Right ventricle myocardium superior (tissue), 1 donor: ENCODE measurements at regions of chr2 and their contacts with region 1.

Region 1: GRCh38 chr2:72892506-72893173 is 5.4 kb downstream of the SPR start:
- DNase-seq: peak; percentile 79
- ATAC-seq: peak; percentile 85

Region 2: DNA sequence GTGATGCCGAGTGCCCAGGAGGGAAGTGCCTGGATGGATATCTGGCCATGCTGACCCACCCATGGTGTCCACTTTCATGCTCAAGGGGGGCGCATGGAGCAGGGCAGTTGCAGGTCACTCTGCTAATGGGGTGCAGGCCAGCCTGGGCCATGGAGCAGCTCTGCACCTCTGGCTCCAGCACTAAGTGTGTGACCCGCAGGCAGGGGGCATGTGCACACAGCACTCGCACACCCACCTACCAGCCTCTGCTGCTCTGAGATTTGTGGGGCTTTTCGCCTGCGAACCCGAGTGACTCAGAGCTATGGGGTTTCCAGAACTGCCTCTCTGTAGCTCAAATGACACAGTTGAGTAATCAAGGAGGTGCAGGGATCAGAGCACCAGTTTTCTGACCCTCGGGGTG is 811.2 kb before region 1 on chr2:
- intact Hi-C with region 1: no loop called
- DNase-seq: no peak
- ATAC-seq: no peak

Region 3: DNA sequence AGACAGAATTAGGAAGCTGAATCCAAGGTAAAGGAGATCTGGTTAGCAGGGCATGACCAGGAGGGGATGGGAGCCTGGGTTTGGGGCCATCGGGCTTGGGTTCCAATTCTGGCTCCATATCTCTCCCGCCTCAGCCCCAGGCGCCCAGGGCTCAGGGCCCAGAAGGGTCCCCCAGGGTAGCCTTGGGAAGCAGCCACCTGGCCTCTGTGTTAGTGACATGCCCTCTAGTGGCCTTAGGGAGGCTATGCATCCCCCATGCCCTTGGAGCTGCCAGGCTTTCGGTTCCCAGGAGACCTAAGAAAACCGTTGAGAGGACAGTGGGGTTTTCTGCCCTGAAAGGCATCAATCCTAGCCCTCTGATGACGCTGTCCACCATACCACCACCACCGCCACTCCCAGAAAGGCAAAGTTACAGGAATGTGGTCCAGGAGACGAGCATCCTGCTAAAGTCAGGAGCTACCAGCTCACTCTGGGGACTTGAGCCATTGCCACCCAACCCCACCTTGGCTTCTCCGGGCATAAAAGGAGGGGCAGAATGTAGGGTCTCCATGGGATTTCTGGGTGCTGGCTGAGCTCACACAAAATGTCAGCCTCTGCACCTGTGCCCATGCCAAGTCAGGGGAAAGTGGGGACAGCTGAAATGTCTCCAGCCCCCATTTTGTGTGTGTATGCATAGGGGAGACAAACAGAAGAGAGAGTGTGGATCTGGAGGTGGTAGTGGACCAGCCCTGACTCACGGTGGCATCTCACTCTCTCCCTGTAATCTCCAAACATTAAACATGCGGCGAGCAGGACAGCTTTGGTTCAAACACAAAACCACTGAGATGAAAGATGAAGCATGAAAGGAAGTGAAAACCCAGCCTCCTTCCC is 81.2 kb after region 1 on chr2:
- intact Hi-C with region 1: loop called (anchors 10 kb)
- DNase-seq: no peak
- ATAC-seq: peak; percentile 88

Region 4: GRCh38 chr2:72993147-72993932 is 100.7 kb after region 1 on chr2:
- intact Hi-C with region 1: no loop called
- DNase-seq: no peak
- ATAC-seq: peak; percentile 44

Region 5: DNA sequence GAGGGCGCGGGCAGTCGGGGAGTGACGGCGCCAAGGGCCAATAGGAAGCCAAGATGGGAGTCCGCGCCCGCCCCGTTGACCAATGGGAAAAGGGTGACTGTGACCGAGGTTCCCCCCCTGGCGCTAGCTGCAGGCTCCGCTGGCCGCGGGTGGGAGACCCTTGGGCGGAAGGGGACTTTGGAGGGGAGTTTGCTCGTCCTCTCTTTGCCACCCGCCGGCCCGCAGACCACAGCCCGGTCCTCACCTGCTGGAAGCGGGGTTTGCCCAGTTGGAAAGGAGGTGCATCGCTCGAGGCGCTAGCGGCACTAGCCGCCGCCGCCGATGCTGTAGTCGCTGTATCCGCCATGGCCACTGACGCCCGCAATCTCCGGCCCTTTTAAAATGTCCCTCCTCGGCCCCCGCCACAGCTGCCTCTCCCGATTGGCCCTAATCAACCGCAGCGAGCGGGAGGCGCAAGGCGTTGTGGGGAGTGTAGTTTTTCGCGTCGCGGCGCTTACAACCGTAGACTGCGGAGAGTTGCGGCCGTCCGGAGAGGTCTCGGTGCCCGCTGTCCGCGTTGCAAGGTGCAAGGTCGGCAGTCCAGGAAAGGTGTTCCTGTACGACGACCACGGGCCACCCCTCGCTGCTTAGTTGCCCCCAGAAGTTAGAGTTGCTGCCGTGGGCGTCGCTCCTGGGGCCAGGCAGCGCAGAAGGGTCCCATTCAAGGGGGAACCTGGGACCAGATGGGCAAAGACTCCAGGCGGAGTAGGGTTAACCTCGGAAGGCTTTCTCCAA is 178.9 kb after region 1 on chr2 and contains the start of gene SFXN5:
- intact Hi-C with region 1: loop called (anchors 5 kb)
- DNase-seq: peak; percentile 99
- ATAC-seq: peak; percentile 97
- total RNA-seq, gene SFXN5: 9.7 TPM

Region 6: GRCh38 chr2:73163483-73164367 is 271.1 kb after region 1 on chr2:
- intact Hi-C with region 1: loop called (anchors 2 kb)
- DNase-seq: peak; percentile 67
- ATAC-seq: peak; percentile 85

Region 7: GRCh38 chr2:73176881-73177644 is 284.4 kb after region 1 on chr2:
- intact Hi-C with region 1: loop called (anchors 5 kb)
- DNase-seq: peak; percentile 97
- ATAC-seq: peak; percentile 98